ENCODE measurements at regions of chr4 and their contacts with region 1.

Region 1: DNA sequence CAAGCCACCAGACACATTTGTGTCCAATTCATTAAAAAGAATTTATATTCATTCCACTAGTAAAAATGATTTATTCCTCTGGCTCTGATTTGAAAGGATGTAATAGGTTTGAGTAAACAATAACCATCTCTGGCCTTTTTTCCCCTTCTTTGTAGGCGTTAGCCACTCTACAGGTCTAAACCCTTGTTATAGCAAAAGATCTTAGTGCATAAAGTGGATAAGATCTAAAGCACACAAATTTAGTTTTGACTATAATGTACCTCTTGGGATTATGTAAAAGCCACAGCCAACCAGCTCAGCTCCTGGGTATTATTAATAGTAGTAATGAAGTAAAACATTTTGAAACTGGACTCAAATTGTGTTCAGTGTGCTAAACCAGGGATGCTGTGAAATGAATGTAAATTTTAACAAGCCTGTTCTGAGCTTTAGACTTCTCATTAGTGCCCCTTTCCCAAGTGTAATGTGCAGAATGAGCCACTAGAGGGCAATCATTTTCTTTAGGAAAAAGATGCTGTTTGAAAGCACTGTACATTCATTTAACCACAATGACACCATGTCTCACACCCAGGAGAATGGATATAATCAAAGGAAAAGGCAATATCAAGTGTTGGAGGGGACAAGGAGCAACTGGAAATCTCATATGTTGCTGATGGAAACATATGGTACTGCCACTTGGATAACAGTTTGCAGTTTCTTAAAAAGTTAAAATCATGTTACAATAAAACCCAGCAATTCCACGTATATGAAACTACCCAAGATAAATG is 69.7 kb downstream of the KLHL8 start:
- DNase-seq: peak in 24 of 35 experiments; percentile 1 to 80 (median 24)
- ATAC-seq: peak; percentile 64 to 76 (median 70)
- H3K4me3 ChIP-seq: no peak overlapping the region
- H3K4me3 Mint-ChIP-seq: no peak overlapping the region
- H3K27ac ChIP-seq: no peak overlapping the region
- H3K27ac Mint-ChIP-seq: no peak overlapping the region
- H3K4me1 ChIP-seq: no peaks in the 10 kb centered on the region
- H3K4me1 Mint-ChIP-seq: peaks cover 2 to 6% (median 2%) of the 10 kb centered on the region in 3 donors
- H3K27me3 ChIP-seq: no peaks in the 10 kb centered on the region
- H3K27me3 Mint-ChIP-seq: no peaks in the 10 kb centered on the region

Region 2: DNA sequence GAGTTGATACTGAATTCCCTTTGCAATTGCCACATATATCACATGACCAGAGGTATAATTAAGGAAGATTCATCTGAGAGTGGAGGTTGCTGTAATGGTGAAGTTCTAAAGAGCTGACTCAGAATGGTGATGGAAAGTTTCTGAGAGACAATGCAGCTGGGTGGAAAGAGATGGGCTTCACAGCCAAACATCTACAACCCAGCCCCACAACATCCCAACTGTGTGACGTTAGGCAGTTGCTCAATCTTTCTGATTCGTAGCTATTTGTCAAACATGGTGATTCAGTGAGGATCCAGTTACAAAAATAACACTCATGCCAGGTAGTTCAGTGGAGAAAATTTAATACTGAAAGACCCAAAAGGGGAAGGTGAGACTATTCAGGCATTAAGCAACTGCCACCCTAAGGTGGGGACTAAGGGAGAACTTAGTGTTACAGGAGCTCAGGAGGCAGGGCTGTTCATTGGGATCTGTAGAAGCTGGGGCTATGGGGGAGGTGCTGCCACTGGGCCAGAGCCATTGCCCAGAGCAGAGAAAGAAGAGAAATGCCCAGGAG is 222.8 kb before region 1 on chr4:
- CTCF ChIA-PET with region 1: interaction called, 3 to 10 read pairs
- POLR2A ChIA-PET with region 1: no interaction called
- DNase-seq: no peak
- ATAC-seq: no peak
- H3K4me3 ChIP-seq: no peak overlapping the region
- H3K4me3 Mint-ChIP-seq: no peak overlapping the region
- H3K27ac ChIP-seq: no peak overlapping the region
- H3K27ac Mint-ChIP-seq: no peak overlapping the region
- H3K4me1 ChIP-seq: no peaks in the 10 kb centered on the region
- H3K4me1 Mint-ChIP-seq: peaks cover 0 to 11% (median 0%) of the 10 kb centered on the region in 3 donors
- H3K27me3 ChIP-seq: no peaks in the 10 kb centered on the region
- H3K27me3 Mint-ChIP-seq: no peaks in the 10 kb centered on the region

Region 3: DNA sequence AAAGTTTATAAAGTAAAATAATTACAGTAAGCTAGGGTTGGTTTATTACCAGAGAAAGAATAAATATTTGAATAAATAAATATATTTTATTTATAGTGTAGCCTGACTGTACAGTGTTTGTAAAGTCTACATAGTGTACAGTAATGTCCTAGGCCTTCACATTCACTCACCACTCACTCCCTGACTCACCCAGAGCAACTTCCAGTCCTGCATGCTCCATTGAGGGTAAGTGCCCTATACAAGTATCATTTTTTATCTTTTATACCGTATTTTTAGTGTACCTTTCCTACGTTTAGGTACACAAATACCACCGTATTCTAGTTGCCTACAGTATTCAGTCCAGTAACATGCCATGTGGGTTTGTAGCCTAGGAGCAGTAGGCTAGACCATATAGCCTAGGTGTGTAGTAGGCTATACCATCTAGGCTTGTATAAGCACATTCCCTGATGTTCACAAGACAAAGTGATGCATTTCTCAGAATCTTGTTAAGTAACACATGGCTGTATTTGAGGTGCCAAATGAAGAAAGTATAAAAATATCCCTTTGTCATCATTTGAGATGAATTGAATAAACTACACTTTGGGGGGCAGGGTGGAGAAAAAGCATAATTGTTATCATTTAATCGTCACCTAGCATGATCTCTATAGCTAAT is 84.5 kb after region 1 on chr4:
- CTCF ChIA-PET with region 1: interaction called, 13 to 29 read pairs
- POLR2A ChIA-PET with region 1: interaction called, 3 to 6 read pairs
- DNase-seq: no peak
- ATAC-seq: no peak
- H3K4me3 ChIP-seq: peak overlapping the region in 1 of 2 donors; percentile 45
- H3K4me3 Mint-ChIP-seq: peak overlapping the region; percentile 62 to 78 (median 75)
- H3K27ac ChIP-seq: no peak overlapping the region
- H3K27ac Mint-ChIP-seq: no peak overlapping the region
- H3K4me1 ChIP-seq: peaks cover 0 to 4% of the 10 kb centered on the region in 2 experiments
- H3K4me1 Mint-ChIP-seq: peaks cover 0 to 9% (median 0%) of the 10 kb centered on the region in 3 donors
- H3K27me3 ChIP-seq: no peaks in the 10 kb centered on the region
- H3K27me3 Mint-ChIP-seq: no peaks in the 10 kb centered on the region

Region 4: DNA sequence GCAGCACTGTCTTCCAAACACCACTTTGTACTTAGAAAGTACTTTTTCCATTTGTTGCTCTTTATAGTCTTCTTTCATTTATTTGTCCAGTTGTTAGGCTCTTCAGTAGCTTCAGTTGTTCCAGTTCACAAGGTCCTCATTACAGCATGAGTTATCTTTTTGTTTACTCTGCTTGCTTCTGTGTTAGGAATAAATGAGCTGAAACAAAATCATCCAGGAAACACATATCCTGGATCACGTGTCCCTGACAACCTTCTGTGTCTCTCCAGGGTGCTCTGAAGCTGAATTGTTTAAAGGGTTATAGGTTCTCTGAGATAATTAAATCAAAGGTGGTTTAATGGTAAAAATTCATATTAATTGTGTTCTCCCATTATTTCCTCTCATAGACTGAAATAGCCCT is 89.7 kb after region 1 on chr4:
- CTCF ChIA-PET with region 1: interaction called, 13 to 29 read pairs
- POLR2A ChIA-PET with region 1: interaction called, 3 to 6 read pairs
- DNase-seq: no peak
- ATAC-seq: no peak
- H3K4me3 ChIP-seq: no peak overlapping the region
- H3K4me3 Mint-ChIP-seq: no peak overlapping the region
- H3K27ac ChIP-seq: no peak overlapping the region
- H3K27ac Mint-ChIP-seq: no peak overlapping the region
- H3K4me1 ChIP-seq: peaks cover 0 to 4% of the 10 kb centered on the region in 2 experiments
- H3K4me1 Mint-ChIP-seq: peaks cover 0 to 9% (median 0%) of the 10 kb centered on the region in 3 donors
- H3K27me3 ChIP-seq: no peaks in the 10 kb centered on the region
- H3K27me3 Mint-ChIP-seq: peaks cover 0 to 8% of the 10 kb centered on the region in 2 donors

Measured in T-cell (primary cell).